ENCODE measurements at regions of chr17 and their contacts with region 1.

Region 1: DNA sequence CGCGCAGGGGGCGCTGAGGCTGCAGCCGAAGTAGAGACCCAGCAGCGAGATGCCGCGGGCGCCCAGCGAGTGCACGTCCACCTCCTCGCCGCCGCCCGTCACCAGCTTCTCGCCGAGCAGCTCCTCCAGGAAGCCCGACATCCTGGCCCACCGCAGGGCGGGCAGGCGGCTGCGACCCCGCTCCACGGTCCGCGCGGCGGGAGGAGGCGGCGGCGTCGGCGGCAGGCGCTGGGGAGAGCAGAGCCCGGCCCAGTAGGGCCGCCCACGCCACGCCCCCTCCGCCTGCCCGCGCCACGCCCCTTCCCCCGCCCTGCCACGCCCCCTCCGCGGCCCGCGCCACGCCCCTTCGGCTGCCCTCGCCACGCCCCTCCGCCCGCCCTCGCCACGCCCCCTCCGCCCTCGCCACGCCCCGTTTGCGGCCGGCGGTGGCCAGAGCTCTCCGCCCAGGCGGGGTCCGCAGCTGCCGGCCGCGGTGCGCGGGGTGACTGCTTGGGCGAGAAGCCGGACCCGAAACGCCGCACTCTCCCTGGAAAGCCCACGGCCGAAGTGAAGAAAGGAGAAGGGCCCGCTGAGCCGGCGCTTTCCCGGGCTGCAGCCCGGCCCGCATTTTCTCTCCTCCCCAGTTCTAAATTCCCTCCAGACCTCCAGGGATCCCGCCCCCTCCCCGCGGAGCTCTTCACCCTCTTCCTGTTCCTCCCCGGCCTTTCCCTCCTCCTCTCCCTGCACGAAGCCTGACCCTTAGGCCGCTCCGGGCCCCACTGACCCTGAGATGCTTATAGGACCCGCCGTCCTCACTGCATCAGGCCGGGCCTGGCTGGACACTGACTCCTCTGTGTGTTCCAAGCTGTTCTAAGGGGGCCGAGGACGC is at the start of gene NXN:
- DNase-seq: peak in 1 of 2 experiments; percentile 98
- H3K4me3 ChIP-seq: peak within 1 kb of the TSS; percentile 73 to 81 (median 76)
- H3K27ac ChIP-seq: peak within 1 kb of the TSS; percentile 31; the same call in 1 of the 2 replicates
- H3K4me1 ChIP-seq: peaks cover 5 to 22% (median 12%) of the 10 kb centered on the region in 4 experiments
- H3K27me3 ChIP-seq: no peaks in the 10 kb centered on the region
- CTCF ChIP-seq: peak in 2 of 3 experiments; percentile 18 to 38; a peak in 3 of 4 replicates
- EP300 ChIP-seq: no peak
- POLR2A ChIP-seq: peak in 1 of 2 experiments; percentile 67; a peak in 2 of 3 replicates
- RAD21 ChIP-seq: peak; percentile 17 to 38; a peak in 2 of 4 replicates
- total RNA-seq, gene NXN: 88.4 and 94.1 TPM in 2 replicates

Region 2: DNA sequence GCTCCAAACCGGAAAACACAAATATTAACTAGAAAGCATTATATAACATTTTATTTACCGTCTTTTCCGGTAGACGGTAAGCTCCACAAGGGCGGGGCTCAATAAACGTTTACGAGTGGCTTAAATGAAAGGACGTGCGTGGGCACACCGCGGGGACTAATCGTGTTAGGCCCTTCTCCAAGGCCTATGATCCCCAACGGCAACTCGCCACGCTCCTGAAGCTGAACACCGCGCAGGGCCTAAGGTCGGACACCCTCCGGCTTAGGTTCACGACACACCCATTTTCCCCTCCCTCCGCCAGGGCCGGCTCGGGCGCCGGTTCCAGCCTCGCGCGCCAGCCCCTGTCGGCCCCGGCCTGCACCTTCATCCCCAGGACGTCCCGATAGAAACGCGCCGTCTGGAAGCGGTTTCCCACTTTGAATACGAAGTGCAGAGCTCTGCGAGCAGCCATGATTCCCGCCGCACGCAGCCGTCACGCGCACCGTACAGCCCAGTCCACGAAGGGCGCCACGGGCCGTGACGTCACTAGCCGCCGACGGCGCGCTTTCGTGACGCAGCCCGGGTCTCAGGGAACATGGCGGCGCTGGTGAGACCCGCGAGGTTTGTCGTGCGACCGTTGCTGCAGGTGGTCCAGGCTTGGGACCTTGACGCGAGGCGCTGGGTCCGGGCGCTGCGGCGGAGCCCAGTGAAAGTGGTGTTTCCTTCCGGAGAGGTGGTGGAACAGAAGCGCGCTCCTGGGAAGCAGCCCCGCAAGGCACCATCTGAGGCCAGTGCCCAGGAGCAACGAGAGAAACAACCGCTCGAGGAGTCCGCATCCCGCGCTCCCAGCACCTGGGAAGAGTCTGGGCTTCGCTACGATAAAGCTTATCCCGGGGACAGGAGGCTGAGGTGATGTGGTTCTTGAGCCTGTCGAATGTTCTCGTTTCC is 197.7 kb before region 1 on chr17 and contains the starts of genes GLOD4 and MRM3:
- CTCF ChIA-PET with region 1: interaction called, 258 read pairs
- POLR2A ChIA-PET with region 1: interaction called, 6 read pairs
- DNase-seq: peak in 1 of 2 experiments; percentile 99
- H3K4me3 ChIP-seq: peak within 1 kb of the TSS; percentile 89 to 100 (median 97)
- H3K27ac ChIP-seq: peak within 1 kb of the TSS; percentile 87
- H3K4me1 ChIP-seq: 0 out of 7 replicates have a peak, but pooled peaks cover 0 to 1% (median 0%) of the 10 kb centered on the region in 4 experiments
- H3K27me3 ChIP-seq: no peaks in the 10 kb centered on the region
- CTCF ChIP-seq: peak in 1 of 3 experiments; percentile 18; a peak in 1 of 4 replicates
- EP300 ChIP-seq: no peak
- POLR2A ChIP-seq: peak; percentile 56 to 97
- RAD21 ChIP-seq: no peak; a peak in 1 of 4 replicates
- total RNA-seq, gene GLOD4: 81.3 and 85.3 TPM in 2 replicates
- total RNA-seq, gene MRM3: 20.8 and 22.3 TPM in 2 replicates

Region 3: GRCh38 chr17:804541-805435 is 175.0 kb before region 1 on chr17:
- CTCF ChIA-PET with region 1: interaction called, 258 read pairs
- POLR2A ChIA-PET with region 1: interaction called, 5 read pairs
- DNase-seq: no peak
- H3K4me3 ChIP-seq: no peak overlapping the region
- H3K27ac ChIP-seq: peak overlapping the region; percentile 65; the same call in 1 of the 2 replicates
- H3K4me1 ChIP-seq: peaks cover 0 to 5% (median 4%) of the 10 kb centered on the region in 4 experiments; a peak in 3 of 7 replicates
- H3K27me3 ChIP-seq: no peaks in the 10 kb centered on the region
- CTCF ChIP-seq: no peak
- EP300 ChIP-seq: no peak
- POLR2A ChIP-seq: no peak
- RAD21 ChIP-seq: no peak

Region 4: DNA sequence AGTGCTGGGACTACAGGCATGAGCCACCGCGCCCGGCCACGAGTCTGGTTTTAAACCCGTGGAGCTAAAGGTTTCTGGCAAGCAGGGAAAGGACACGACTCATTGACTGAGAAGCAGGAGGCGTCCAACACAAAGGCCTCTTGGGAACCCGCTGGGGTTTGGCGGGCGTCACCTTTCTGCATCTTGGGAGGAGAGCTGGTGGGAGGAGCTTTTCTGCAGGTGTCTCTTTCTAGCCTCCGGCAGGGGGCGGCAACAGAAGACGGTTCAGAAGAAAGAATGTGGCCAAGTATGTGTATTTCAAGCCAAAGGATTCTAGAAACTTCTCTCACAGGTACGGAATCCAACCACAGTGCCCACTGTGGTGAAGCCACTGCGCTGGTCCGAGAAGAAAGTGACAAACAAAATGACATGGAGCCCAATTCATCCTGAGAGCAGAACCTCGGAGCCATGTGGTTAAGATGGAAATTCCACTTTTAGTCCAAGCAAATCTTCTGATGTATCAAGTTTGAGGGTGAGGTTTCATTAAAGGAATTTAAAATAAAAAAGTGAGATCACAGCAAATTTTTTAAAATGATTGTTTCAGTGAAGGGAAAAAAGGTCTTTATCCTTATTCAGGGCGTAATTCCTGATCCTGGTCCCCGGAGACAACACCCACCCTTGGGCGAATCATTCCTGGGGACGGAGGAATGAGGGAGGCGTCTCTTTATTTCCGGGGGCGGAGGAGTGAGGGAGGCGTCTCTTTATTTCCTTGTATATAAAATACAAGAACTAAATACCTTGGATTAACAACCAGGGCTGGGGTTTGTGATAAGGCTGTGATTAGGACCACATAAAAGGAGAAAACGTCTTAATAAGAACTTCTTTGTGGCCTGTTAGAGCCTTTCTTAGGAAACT is 100.0 kb before region 1 on chr17:
- CTCF ChIA-PET with region 1: interaction called, 73 read pairs
- POLR2A ChIA-PET with region 1: interaction called, 4 read pairs
- DNase-seq: peak; percentile 87 to 93
- H3K4me3 ChIP-seq: no peak overlapping the region
- H3K27ac ChIP-seq: no peak overlapping the region
- H3K4me1 ChIP-seq: peaks cover 2 to 38% (median 3%) of the 10 kb centered on the region in 4 experiments
- H3K27me3 ChIP-seq: no peaks in the 10 kb centered on the region
- CTCF ChIP-seq: peak; percentile 46 to 74 (median 73)
- EP300 ChIP-seq: 0 out of 3 replicates have a peak, but pooled peaks of 1 of the 2 experiments have one; percentile 32
- POLR2A ChIP-seq: no peak
- RAD21 ChIP-seq: peak; percentile 63 to 75

Region 5: GRCh38 chr17:996554-997344 is 17.0 kb after region 1 on chr17 and contains the start of gene TIMM22:
- CTCF ChIA-PET with region 1: interaction called, 27 read pairs
- POLR2A ChIA-PET with region 1: interaction called, 5 read pairs
- DNase-seq: peak; percentile 94 to 97
- H3K4me3 ChIP-seq: peak within 1 kb of the TSS; percentile 86 to 99 (median 94)
- H3K27ac ChIP-seq: peak within 1 kb of the TSS; percentile 92
- H3K4me1 ChIP-seq: peaks cover 0 to 5% (median 0%) of the 10 kb centered on the region in 4 experiments; a peak in 2 of 7 replicates
- H3K27me3 ChIP-seq: no peaks in the 10 kb centered on the region; a peak in 1 of 7 replicates
- CTCF ChIP-seq: peak; percentile 82 to 93 (median 88)
- EP300 ChIP-seq: peak; percentile 38 to 99; a peak in 2 of 3 replicates
- POLR2A ChIP-seq: peak; percentile 79 to 93
- RAD21 ChIP-seq: peak; percentile 91 to 93
- total RNA-seq, gene TIMM22: 17.2 and 17.4 TPM in 2 replicates

Region 6: DNA sequence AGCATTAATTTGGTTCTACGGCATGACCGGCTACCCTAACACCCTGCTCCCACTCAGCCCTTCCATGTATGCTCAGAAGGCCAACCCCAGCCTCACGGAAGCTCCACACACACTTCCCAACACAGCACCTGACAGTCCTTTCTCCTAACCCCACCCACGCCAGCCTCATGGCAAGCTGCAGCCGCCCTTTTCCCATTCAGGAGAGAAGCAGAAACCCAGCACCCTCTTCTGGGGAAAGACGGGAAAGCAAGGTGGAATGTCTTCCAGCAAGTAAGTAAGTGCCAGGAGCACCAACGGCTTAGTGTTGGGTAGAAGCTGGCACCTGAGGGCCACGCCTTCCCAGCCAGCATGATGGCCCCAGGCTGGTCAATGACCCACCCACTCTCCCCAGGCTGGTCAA is 167.9 kb after region 1 on chr17:
- CTCF ChIA-PET with region 1: no interaction called
- POLR2A ChIA-PET with region 1: no interaction called
- DNase-seq: peak; percentile 60 to 87
- H3K4me3 ChIP-seq: no peak overlapping the region
- H3K27ac ChIP-seq: no peak overlapping the region
- H3K4me1 ChIP-seq: peaks cover 0 to 4% (median 1%) of the 10 kb centered on the region in 4 experiments; a peak in 2 of 7 replicates
- H3K27me3 ChIP-seq: no peaks in the 10 kb centered on the region
- CTCF ChIP-seq: peak; percentile 68 to 86 (median 72)
- EP300 ChIP-seq: no peak
- POLR2A ChIP-seq: no peak
- RAD21 ChIP-seq: peak; percentile 76 to 81

Measured in H1 (cell line).